Right ventricle myocardium superior (tissue), 1 donor: ENCODE measurements at regions of chr4 and their contacts with region 1.

Region 1: DNA sequence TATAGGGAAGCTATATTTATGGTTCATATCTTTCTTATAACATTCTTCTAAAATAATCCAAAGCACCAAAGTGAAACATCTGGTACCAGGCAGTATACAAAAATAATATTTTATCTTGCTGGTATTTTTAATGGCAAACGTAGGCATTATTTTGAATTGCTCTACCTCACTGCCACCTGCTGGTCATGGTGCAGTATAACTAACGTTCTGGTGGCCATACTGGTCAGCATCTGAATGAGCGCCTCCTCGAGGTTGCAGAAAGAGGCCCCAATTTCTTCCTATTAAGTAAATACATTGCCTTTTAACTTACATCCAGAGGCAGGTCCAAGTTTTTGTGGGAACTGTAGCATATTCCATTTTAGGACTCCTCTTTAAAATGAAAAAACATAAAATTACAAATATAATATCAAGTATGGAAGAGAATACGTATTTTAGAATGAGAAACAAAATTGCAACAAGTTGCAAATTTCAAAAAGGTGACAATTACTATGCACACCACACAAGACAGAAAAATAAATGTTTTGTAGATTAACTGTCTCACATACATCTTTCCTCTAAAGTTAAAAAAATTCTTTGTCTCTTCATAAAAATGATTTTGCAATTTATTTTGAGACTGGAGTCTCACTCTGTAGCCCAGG is 22.9 kb upstream of the CWH43 start:
- DNase-seq: peak; percentile 49
- ATAC-seq: peak; percentile 92

Region 2: DNA sequence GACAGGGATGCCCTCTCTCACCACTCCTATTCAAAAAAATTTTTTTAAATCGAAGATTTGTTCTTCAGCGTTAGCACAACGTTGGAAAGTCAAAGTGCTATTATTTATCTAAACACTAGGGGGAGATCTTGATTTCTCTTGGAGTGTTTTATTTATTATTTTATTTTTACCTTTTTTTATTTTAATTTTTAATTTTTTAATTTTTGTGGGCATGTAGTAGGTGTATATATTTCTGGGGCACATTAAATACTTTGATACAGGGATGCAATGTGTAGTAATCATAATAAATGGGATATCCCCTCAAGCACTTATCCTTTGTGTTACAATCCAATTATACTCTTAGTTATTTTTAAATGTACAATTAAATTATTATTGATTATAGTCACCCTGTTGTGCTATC is 517.5 kb before region 1 on chr4:
- intact Hi-C with region 1: loop called (anchors 10 kb)
- DNase-seq: no peak
- ATAC-seq: no peak

Region 3: GRCh38 chr4:48578132-48578968 is 384.8 kb before region 1 on chr4:
- intact Hi-C with region 1: loop called (anchors 5 kb)
- DNase-seq: no peak
- ATAC-seq: peak; percentile 91